Heart left ventricle (tissue), 16 donors: ENCODE measurements at regions of chr2 and their contacts with region 1.

Region 1: GRCh38 chr2:35245508-35245907 is 1110.1 kb upstream of the CRIM1 start:
- DNase-seq: no peak
- ATAC-seq: no peak
- H3K4me3 ChIP-seq: no peak overlapping the region
- H3K27ac ChIP-seq: no peak overlapping the region
- H3K4me1 ChIP-seq: no peaks in the 10 kb centered on the region
- H3K27me3 ChIP-seq: no peaks in the 10 kb centered on the region
- CTCF ChIP-seq: no peak
- POLR2A ChIP-seq: no peak

Region 2: DNA sequence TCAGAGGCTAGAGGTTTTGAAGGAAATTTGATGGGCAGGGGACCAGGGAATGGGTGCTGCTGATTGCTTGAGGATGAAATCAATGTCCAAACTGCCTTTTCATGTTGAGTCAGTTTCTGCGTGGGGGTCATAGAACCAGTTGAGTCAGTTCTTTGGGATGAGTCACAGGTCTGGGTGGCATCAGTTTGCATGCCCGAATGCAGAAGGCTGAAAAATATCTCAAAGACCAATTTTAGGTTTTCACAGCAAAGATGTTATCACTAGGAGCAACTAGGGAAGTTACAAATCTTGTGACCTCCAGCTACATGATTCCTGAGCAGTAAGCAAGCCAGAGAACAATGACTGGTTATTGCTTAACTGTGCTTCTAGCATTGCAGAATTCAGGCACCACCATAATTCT is 25.0 kb before region 1 on chr2:
- intact Hi-C with region 1: no loop called
- DNase-seq: no peak
- ATAC-seq: no peak
- H3K4me3 ChIP-seq: no peak overlapping the region
- H3K27ac ChIP-seq: no peak overlapping the region
- H3K4me1 ChIP-seq: no peaks in the 10 kb centered on the region
- H3K27me3 ChIP-seq: no peaks in the 10 kb centered on the region
- CTCF ChIP-seq: no peak
- POLR2A ChIP-seq: no peak

Region 3: DNA sequence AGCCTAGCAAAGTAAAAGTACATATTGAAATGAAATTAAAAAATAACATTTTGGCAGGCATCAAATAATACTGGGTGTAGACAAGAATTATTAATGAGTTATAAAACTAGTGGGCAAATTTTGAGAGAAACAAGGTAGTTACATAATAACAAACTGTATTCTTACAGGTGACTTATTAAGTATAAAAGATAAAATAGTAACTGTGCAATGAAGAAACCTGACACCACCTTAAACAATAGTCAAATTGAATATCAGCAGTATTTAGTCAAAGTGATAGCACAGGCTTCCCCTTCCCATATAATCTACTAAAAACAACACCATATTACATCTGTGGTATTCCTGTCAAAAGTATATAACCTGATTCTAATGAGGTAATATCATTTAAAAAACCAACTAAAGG is 10.3 kb after region 1 on chr2:
- intact Hi-C with region 1: loop called in 1 of 10 experiments (anchors 1 kb)
- DNase-seq: no peak
- ATAC-seq: no peak
- H3K4me3 ChIP-seq: no peak overlapping the region
- H3K27ac ChIP-seq: no peak overlapping the region
- H3K4me1 ChIP-seq: no peaks in the 10 kb centered on the region
- H3K27me3 ChIP-seq: no peaks in the 10 kb centered on the region
- CTCF ChIP-seq: no peak
- POLR2A ChIP-seq: no peak

Region 4: DNA sequence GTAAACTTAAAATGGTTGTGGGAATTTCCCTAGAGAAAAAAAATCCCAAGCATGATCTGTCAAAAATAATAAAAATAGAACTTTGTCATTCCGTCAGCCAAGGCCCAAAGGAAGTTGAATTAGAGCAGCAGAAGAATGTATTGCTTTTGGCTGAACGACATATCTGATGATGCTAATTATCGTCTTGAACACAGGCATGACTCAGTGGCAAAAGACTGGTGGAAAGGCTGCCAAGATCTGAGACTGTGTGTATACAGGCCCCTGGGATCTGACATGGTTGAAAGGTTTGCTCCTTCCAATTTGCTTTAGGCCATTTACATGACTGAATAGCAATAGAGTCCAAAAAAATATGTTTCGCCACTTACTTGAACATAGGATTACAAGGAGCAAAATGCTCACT is 53.0 kb after region 1 on chr2:
- intact Hi-C with region 1: no loop called
- DNase-seq: peak in 2 of 5 donors; percentile 25 to 36
- ATAC-seq: peak in 3 of 4 donors; percentile 33 to 66 (median 59)
- H3K4me3 ChIP-seq: no peak overlapping the region
- H3K27ac ChIP-seq: no peak overlapping the region
- H3K4me1 ChIP-seq: no peaks in the 10 kb centered on the region
- H3K27me3 ChIP-seq: no peaks in the 10 kb centered on the region
- CTCF ChIP-seq: no peak
- POLR2A ChIP-seq: no peak